ENCODE measurements at regions of chr5 and their contacts with region 1.

Region 1: DNA sequence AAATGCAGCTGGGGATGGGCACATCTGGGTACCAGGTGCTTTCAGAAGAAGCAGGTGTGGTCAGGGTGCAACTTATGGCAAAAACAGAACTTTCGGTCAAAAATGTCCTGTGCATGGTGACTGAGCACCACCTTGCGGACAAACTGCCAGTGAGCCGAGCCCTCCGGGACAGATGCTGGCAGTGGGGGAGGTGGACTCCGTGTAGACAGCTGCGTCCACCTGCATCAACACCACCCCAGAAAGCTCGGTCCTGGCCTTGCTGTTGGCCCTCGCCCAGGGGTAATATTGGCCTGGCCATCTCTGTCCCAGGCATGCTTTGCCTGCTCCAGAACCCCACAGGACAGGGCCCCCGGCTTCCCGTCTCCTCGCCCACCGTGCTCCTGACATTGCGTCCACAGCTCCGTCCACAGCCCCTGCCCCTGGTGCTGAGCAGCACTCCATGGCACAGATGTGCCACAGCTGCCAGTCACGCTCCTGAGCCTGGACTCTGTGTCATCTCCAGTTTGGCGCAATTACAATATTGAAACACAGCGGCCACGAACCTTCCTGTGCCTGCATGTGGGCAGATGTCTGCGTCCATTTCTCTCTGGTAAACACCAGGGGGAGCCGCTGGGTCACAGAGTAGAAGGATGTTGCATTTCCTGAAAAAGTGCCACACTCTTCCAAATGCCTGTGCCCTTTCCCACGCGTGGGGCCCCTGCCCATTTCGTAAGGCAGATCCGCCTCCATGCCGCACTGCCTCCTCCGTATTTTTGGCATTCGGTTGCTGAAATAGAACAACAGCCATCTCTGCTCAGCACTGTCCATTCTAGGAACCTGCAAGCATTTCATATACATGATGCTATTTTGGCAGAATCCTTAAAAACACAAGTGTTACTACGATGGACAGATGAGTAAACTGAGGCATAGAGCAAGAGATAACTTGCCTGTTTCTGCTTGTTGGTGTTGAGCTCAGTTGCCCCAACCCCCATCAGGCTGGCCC is 33.4 kb upstream of the SLC6A19 start:
- DNase-seq: peak; percentile 86
- H3K4me3 ChIP-seq: peak overlapping the region; percentile 26 to 49; a peak in 2 of 4 replicates
- H3K27ac ChIP-seq: no peak overlapping the region
- H3K4me1 ChIP-seq: peaks cover 0 to 8% of the 10 kb centered on the region in 2 experiments; a peak in 1 of 4 replicates
- H3K27me3 ChIP-seq: no peaks in the 10 kb centered on the region
- CTCF ChIP-seq: peak; percentile 65
- EP300 ChIP-seq: no peak
- RAD21 ChIP-seq: peak; percentile 87

Region 2: GRCh38 chr5:916441-917293 is 251.4 kb before region 1 on chr5:
- CTCF ChIA-PET with region 1: interaction called, 119 read pairs
- POLR2A ChIA-PET with region 1: no interaction called
- DNase-seq: no peak
- H3K4me3 ChIP-seq: no peak overlapping the region
- H3K27ac ChIP-seq: no peak overlapping the region; a peak in 1 of 4 replicates
- H3K4me1 ChIP-seq: peaks cover 0 to 8% of the 10 kb centered on the region in 2 experiments; a peak in 2 of 4 replicates
- H3K27me3 ChIP-seq: no peaks in the 10 kb centered on the region
- CTCF ChIP-seq: no peak
- EP300 ChIP-seq: no peak
- RAD21 ChIP-seq: no peak

Region 3: DNA sequence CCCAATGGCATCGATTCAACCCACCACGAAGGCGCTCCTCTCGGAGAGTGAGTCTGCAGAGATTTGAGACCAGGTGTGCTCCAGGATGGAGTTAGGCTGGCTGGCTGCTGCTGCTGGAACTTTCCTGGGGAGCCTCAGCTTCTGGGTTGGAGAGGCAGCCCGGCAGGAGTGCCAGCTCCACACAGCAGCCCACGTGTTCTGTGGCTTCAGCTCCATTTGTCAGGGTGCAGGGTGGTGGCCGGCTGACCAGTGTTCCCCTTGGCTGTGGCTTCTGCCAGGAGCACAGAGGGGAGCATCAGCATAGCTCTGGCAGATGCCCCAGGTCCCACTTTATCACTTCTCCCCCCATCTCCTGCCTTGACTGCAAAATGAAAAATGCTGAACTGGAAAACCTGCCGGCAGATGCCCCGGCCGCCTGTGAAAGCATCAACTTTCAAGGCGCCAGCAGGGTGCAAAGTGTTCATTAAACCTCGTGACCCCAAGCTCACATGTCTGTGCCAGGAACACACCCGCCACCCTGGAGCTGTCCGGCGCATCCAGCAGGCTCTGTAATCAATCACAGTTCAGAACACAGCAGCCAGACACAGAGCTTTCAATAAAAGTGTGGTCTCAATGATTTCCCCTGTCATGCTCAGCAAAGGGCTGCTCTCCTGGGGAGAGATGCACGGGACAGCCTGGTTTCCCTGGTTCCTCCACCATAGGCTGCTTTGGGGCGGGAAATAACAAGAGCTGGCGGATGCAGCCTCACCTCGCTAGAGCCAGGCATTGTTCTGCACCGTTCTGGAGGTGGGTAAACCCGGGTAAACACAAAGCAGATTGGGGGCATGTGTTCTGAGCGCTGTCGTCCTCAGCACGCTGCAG is 222.1 kb before region 1 on chr5:
- CTCF ChIA-PET with region 1: interaction called, 17 read pairs
- POLR2A ChIA-PET with region 1: no interaction called
- DNase-seq: peak; percentile 69
- H3K4me3 ChIP-seq: no peak overlapping the region; a peak in 1 of 4 replicates
- H3K27ac ChIP-seq: peak overlapping the region in 1 of 2 experiments; percentile 47; a peak in 2 of 4 replicates
- H3K4me1 ChIP-seq: peaks cover 0 to 36% of the 10 kb centered on the region in 2 experiments; a peak in 1 of 4 replicates
- H3K27me3 ChIP-seq: peaks cover 27% of the 10 kb centered on the region
- CTCF ChIP-seq: no peak
- EP300 ChIP-seq: no peak
- RAD21 ChIP-seq: no peak

Region 4: GRCh38 chr5:1016036-1016435 is 152.0 kb before region 1 on chr5:
- CTCF ChIA-PET with region 1: interaction called, 22 read pairs
- POLR2A ChIA-PET with region 1: no interaction called
- DNase-seq: no peak
- H3K4me3 ChIP-seq: no peak overlapping the region
- H3K27ac ChIP-seq: no peak overlapping the region
- H3K4me1 ChIP-seq: no peaks in the 10 kb centered on the region
- H3K27me3 ChIP-seq: peaks cover 4% of the 10 kb centered on the region; the same call in 1 of the 2 replicates
- CTCF ChIP-seq: no peak
- EP300 ChIP-seq: no peak
- RAD21 ChIP-seq: no peak

Region 5: GRCh38 chr5:1134478-1134877 is 33.5 kb before region 1 on chr5:
- CTCF ChIA-PET with region 1: interaction called, 49 read pairs
- POLR2A ChIA-PET with region 1: no interaction called
- DNase-seq: no peak
- H3K4me3 ChIP-seq: no peak overlapping the region
- H3K27ac ChIP-seq: no peak overlapping the region
- H3K4me1 ChIP-seq: no peaks in the 10 kb centered on the region; a peak in 1 of 4 replicates
- H3K27me3 ChIP-seq: no peaks in the 10 kb centered on the region
- CTCF ChIP-seq: no peak
- EP300 ChIP-seq: no peak
- RAD21 ChIP-seq: no peak

Region 6: DNA sequence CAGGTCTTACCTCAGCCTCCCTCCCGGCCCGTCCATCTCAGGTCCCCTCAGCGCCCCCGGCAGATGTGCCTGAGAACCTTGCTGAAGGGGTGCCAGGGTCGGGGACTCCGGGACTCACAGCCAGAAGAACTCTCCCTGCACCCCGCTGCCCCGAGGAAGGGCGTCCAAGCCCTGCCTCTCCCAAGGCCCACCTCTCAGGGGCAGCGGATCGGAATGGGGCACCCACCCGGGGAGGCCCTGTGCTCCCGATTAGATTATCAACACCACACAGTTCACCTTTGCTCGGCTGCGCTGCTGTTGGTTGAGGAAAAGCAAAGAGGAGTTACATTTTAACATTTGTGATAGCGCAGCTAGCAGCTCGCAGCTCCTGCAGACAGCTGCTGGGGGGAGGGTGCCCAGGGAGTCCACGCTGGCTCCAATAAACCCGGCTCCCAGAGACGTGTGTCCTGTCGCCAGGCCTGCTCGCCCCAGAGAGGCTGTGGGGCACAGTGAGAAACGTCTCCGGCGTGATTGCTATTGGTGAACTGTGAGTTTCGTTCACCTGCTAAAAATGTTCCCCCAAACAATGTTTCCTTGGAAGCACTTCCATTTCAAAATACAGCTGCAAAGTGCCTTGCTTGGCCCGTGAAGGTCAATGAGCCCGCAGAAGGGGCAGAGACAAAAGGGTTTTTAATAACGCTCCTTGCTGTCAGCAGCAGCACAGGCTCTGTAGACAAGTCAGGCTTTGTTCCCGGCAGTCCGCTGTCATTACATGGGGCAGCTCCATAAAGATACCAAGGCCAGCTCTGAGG is 14.8 kb after region 1 on chr5:
- CTCF ChIA-PET with region 1: interaction called, 76 read pairs
- POLR2A ChIA-PET with region 1: no interaction called
- DNase-seq: no peak
- H3K4me3 ChIP-seq: no peak overlapping the region
- H3K27ac ChIP-seq: no peak overlapping the region
- H3K4me1 ChIP-seq: peaks cover 0 to 20% of the 10 kb centered on the region in 2 experiments; a peak in 1 of 4 replicates
- H3K27me3 ChIP-seq: no peaks in the 10 kb centered on the region
- CTCF ChIP-seq: no peak
- EP300 ChIP-seq: no peak
- RAD21 ChIP-seq: no peak

Region 7: GRCh38 chr5:1462358-1462757 is 294.3 kb after region 1 on chr5:
- CTCF ChIA-PET with region 1: no interaction called
- POLR2A ChIA-PET with region 1: no interaction called
- DNase-seq: peak; percentile 88
- H3K4me3 ChIP-seq: no peak overlapping the region
- H3K27ac ChIP-seq: no peak overlapping the region
- H3K4me1 ChIP-seq: peaks cover 0 to 7% of the 10 kb centered on the region in 2 experiments; a peak in 1 of 4 replicates
- H3K27me3 ChIP-seq: no peaks in the 10 kb centered on the region
- CTCF ChIP-seq: no peak
- EP300 ChIP-seq: no peak
- RAD21 ChIP-seq: no peak

Region 8: DNA sequence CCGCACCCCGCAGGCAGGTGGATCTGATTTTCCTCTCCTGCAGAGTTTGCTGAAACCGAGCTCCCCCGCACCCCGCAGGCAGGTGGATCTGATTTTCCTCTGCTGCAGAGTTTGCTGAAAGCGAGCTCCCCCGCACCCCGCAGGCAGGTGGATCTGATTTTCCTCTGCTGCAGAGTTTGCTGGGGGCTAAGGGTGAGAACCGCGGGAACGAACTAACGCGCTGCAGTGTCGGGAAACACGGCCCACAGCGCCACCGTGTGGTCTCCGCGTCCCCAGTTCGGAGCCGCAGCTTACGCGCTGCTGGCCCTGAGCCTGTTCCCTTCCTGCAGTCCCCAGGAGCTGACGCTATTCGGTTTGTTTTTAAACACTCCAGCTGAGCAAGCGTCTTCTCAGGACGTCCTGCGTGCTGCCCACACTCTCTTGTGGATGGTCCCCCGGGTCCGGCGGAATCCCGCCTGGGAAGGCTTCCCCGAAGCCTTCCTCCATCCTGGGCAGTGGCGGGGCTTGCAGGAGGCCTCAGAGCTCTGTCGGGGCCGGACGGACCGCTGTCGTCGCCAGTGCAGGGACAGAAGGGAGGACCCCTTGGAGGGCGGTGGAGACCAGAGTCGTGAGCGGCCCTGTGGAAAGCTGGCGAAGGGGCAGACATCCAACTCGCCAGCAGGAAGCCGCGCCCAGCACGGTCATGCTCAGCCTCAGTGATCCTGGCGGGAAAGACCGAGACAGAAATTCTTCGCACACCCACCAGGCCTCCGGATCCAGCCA is 477.0 kb after region 1 on chr5:
- CTCF ChIA-PET with region 1: interaction called, 38 read pairs
- POLR2A ChIA-PET with region 1: no interaction called
- DNase-seq: peak; percentile 91
- H3K4me3 ChIP-seq: peak overlapping the region; percentile 22 to 54; a peak in 3 of 4 replicates
- H3K27ac ChIP-seq: no peak overlapping the region
- H3K4me1 ChIP-seq: peaks cover 0 to 4% of the 10 kb centered on the region in 2 experiments; a peak in 1 of 4 replicates
- H3K27me3 ChIP-seq: peaks cover 25% of the 10 kb centered on the region
- CTCF ChIP-seq: peak; percentile 73
- EP300 ChIP-seq: no peak
- RAD21 ChIP-seq: peak; percentile 84